ENCODE measurements at regions of chr12 and their contacts with region 1.

Region 1: GRCh38 chr12:57276935-57277563 is 26.1 kb upstream of the STAC3 start:
- DNase-seq: no peak
- H3K4me3 ChIP-seq: no peak overlapping the region
- H3K4me3 Mint-ChIP-seq: no peak overlapping the region
- H3K27ac ChIP-seq: no peak overlapping the region
- H3K27ac Mint-ChIP-seq: no peak overlapping the region
- H3K4me1 ChIP-seq: peaks cover 16% of the 10 kb centered on the region
- H3K4me1 Mint-ChIP-seq: peaks cover 13 to 26% (median 19%) of the 10 kb centered on the region in 4 donors
- H3K27me3 ChIP-seq: no peaks in the 10 kb centered on the region
- H3K27me3 Mint-ChIP-seq: no peaks in the 10 kb centered on the region

Region 2: DNA sequence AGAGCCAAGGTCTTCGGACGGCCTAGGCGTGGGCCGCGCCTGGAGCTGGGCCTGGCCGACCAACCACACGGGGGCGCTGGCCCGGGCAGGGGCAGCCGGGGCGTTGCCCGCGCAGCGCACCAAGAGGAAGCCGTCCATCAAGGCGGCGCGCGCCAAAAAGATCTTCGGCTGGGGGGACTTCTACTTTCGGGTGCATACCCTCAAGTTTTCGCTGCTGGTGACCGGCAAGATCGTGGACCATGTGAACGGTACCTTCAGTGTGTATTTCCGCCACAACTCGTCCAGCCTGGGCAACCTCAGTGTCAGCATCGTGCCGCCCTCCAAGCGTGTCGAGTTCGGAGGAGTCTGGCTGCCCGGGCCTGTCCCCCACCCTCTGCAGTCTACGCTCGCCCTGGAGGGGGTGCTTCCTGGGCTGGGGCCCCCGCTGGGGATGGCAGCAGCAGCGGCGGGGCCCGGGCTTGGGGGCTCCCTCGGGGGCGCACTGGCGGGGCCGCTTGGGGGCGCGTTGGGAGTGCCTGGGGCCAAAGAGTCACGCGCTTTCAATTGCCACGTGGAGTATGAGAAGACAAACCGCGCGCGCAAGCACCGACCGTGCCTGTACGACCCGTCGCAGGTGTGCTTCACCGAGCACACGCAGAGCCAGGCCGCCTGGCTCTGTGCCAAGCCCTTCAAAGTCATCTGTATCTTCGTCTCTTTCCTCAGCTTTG is 51.9 kb before region 1 on chr12:
- CTCF ChIA-PET with region 1: no interaction called
- POLR2A ChIA-PET with region 1: no interaction called
- intact Hi-C with region 1: no loop called
- DNase-seq: peak; percentile 56 to 71 (median 65)
- H3K4me3 ChIP-seq: no peak overlapping the region
- H3K4me3 Mint-ChIP-seq: peak overlapping the region in 7 of 8 donors; percentile 45 to 74 (median 60)
- H3K27ac ChIP-seq: no peak overlapping the region
- H3K27ac Mint-ChIP-seq: peak overlapping the region in 4 of 7 donors; percentile 17 to 81 (median 42)
- H3K4me1 ChIP-seq: peaks cover 52% of the 10 kb centered on the region
- H3K4me1 Mint-ChIP-seq: peaks cover 31 to 70% (median 45%) of the 10 kb centered on the region in 4 donors
- H3K27me3 ChIP-seq: peaks cover 59% of the 10 kb centered on the region
- H3K27me3 Mint-ChIP-seq: peaks cover 45 to 53% of the 10 kb centered on the region in 2 donors

Region 3: GRCh38 chr12:57261428-57261865 is 15.6 kb before region 1 on chr12:
- CTCF ChIA-PET with region 1: interaction called, 12 read pairs
- POLR2A ChIA-PET with region 1: no interaction called
- intact Hi-C with region 1: no loop called
- DNase-seq: no peak
- H3K4me3 ChIP-seq: no peak overlapping the region
- H3K4me3 Mint-ChIP-seq: no peak overlapping the region
- H3K27ac ChIP-seq: no peak overlapping the region
- H3K27ac Mint-ChIP-seq: peak overlapping the region in 1 of 7 donors; percentile 30
- H3K4me1 ChIP-seq: no peaks in the 10 kb centered on the region
- H3K4me1 Mint-ChIP-seq: peaks cover 0 to 4% (median 2%) of the 10 kb centered on the region in 4 donors
- H3K27me3 ChIP-seq: no peaks in the 10 kb centered on the region
- H3K27me3 Mint-ChIP-seq: no peaks in the 10 kb centered on the region

Measured in CD4-positive, alpha-beta memory T cell (primary cell).